ENCODE measurements at regions of chr2 and their contacts with region 1.

Region 1: DNA sequence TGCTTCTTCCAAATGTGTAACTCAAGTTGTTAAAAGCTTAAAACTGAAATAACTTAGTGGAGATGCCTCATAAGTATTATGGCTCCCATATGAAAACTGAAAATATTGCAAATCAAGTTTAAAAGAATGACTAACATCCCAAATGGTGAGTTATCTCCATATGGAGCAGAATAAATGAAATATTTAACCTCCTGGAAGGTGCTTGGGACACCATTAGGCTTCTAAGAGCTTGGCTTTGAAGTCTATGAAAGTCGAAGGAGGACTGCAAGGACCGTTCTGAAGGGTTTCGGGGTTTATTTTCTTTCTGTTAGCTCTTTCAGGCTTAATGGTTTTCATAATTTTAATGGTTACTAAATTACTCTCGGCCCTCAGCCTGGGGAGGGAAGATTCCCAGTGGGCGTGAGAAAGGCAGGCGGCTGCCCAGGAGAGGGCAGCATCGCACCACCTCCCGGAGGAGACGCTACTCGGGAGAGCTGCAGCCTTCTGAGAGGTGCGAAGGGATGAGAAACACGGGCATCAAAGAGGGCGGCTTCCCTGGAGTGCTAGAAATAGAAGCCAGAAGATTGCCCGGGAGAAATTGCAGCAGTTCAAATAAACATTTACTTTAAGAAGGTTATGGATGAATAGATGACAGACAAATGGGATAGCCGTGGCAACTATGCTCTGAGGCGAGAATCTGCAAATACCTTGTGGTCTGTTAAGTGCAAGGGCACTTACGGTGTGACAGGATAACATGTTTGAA is 43.1 kb downstream of the MAP3K19 start:
- DNase-seq: no peak
- H3K4me3 ChIP-seq: no peak overlapping the region
- H3K27me3 ChIP-seq: peaks cover 7% of the 10 kb centered on the region; the same call in 1 of the 2 replicates
- CTCF ChIP-seq: peak; percentile 97

Region 2: GRCh38 chr2:134727385-134727784 is 276.8 kb before region 1 on chr2:
- CTCF ChIA-PET with region 1: no interaction called
- POLR2A ChIA-PET with region 1: no interaction called
- DNase-seq: no peak
- H3K4me3 ChIP-seq: no peak overlapping the region
- H3K27me3 ChIP-seq: no peaks in the 10 kb centered on the region; the same call in 1 of the 2 replicates
- CTCF ChIP-seq: no peak

Region 3: DNA sequence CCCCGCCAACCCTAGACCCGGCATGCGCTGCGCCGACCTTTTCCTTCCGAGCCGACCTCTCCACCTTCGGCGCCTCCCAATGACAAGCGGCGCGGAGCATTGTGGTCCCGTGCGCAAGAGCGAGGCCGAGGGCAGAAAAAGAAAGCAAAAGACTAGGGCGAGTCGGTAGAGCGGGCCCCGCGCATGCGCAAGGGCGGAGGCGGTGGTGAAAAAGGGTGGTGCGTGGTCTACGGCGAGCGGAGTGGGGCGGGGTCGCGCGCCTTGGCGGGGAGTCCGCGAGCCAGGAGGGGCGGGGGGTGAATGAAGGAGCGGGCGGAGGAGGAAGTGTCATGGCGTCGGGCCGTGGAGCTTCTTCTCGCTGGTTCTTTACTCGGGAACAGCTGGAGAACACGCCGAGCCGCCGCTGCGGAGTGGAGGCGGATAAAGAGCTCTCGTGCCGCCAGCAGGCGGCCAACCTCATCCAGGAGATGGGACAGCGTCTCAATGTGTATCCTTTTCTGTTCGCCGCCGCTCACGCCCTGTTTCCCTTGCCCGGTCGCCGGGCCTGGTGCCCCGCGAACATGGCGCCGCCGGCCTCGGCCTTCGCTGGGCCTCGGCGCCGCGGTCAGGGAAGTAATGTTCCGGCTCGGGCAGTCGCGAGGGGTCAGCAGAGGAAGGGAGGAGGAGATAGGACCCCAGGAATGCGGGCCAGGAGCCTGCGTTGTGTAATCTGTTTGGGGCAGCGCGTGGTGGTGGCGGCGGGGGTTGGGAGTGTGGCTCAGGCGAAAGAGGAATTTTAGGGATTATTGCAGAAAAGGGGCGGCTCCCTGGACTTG is 85.4 kb before region 1 on chr2 and contains the start of gene CCNT2:
- CTCF ChIA-PET with region 1: no interaction called
- POLR2A ChIA-PET with region 1: no interaction called
- DNase-seq: peak; percentile 94
- H3K4me3 ChIP-seq: peak within 1 kb of the TSS; percentile 100
- H3K27me3 ChIP-seq: no peaks in the 10 kb centered on the region
- CTCF ChIP-seq: no peak
- polyA plus RNA-seq, gene CCNT2: 9.1 and 13.8 TPM in 2 replicates

Region 4: GRCh38 chr2:134980639-134981038 is 23.5 kb before region 1 on chr2:
- CTCF ChIA-PET with region 1: no interaction called
- POLR2A ChIA-PET with region 1: no interaction called
- DNase-seq: no peak
- H3K4me3 ChIP-seq: no peak overlapping the region
- H3K27me3 ChIP-seq: no peaks in the 10 kb centered on the region; the same call in 1 of the 2 replicates
- CTCF ChIP-seq: no peak

Region 5: DNA sequence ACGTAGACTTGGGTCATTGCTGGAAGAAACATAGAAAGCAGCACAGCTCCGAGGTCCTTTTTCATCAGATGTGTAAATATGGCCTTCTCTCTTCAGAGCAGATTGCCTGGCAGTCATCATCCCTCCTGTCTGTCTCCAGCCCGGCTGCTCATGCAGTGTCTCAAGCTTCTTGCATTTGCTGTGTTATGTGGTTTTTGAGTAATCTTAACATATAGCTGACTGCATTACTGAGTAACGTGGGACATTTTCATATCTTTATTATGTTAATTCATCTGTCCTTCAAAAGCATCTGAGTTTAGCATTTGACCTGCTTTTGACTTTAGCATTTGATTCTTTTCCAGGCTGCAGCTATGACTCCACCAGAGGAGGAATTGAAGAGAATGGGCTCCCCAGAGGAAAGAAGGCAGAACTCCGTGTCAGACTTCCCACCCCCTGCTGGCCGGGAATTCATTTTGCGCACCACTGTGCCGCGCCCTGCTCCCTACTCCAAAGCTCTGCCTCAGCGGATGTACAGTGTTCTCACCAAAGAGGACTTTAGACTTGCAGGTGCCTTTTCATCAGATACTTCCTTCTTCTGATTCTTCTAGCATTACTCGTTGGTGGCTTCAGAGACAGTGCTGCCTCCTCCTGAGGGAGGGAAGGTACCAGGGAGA is 164.2 kb after region 1 on chr2:
- CTCF ChIA-PET with region 1: interaction called, 10 read pairs
- POLR2A ChIA-PET with region 1: no interaction called
- DNase-seq: no peak
- H3K4me3 ChIP-seq: no peak overlapping the region
- H3K27me3 ChIP-seq: no peaks in the 10 kb centered on the region
- CTCF ChIP-seq: no peak

Region 6: DNA sequence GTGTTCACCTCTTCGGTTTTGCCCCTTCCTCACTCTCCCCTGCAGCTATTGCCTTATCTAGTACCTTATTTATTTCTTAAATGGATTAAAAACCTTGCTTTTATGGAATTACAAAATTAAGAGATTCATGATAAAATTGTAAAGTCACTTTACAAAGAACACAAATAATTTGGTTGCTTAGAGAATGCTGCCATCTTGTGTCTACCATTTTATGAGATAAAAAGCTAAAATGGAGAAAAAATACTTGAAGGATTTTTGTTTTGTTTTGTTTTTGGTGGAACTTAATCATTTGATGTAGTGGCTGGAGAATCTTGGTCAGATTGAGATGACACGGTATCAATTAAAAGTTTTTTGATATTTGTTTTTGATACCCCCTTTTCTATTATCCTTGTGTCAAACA is 596.7 kb after region 1 on chr2:
- CTCF ChIA-PET with region 1: interaction called, 22 read pairs
- POLR2A ChIA-PET with region 1: no interaction called
- DNase-seq: no peak
- H3K4me3 ChIP-seq: no peak overlapping the region
- H3K27me3 ChIP-seq: no peaks in the 10 kb centered on the region
- CTCF ChIP-seq: no peak

Region 7: GRCh38 chr2:135709992-135710391 is 705.8 kb after region 1 on chr2:
- CTCF ChIA-PET with region 1: interaction called, 82 read pairs
- POLR2A ChIA-PET with region 1: no interaction called
- DNase-seq: no peak
- H3K4me3 ChIP-seq: no peak overlapping the region
- H3K27me3 ChIP-seq: no peaks in the 10 kb centered on the region
- CTCF ChIP-seq: peak; percentile 92

Region 8: DNA sequence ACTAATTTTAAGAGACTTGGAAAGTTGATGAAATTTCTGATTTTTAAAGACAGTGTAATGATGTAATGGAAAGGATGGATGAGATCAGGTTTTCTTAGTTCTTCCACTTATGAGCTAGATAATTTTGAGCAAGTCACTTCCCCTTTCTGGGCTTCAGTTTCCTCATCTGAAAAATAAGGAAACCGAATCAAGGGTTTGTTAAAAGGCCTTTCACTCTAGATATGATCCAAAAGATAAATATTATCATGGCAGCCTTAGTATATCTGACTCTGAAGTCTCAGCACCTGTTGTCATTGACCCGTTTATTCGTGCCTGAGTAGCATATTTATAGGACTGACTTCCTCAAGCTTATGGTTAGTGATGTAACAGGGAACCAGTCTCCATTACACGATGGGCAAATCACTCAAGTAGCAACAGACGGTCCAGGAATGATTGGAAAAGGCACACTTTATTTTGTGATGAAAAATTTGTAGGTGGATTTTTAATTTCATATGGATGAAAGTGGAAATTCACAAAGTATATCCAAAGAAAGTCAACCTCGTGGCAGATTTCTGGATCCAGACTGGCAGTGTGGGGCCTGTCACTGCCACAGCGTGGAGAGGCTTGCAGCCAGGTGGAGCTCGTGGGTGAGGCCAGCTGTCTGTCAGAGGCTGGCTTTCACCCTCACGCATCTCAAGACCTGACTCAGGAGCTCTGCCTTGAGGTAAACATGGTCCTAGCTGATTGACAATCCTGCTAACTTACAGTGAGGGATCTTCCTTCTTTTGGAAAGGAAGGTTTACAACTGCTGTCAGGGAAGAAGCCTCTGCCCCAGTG is 1251.7 kb after region 1 on chr2:
- CTCF ChIA-PET with region 1: no interaction called
- POLR2A ChIA-PET with region 1: no interaction called
- DNase-seq: no peak
- H3K4me3 ChIP-seq: no peak overlapping the region
- H3K27me3 ChIP-seq: no peaks in the 10 kb centered on the region
- CTCF ChIP-seq: no peak